ENCODE measurements at regions of chr9 and their contacts with region 1.

Region 1: DNA sequence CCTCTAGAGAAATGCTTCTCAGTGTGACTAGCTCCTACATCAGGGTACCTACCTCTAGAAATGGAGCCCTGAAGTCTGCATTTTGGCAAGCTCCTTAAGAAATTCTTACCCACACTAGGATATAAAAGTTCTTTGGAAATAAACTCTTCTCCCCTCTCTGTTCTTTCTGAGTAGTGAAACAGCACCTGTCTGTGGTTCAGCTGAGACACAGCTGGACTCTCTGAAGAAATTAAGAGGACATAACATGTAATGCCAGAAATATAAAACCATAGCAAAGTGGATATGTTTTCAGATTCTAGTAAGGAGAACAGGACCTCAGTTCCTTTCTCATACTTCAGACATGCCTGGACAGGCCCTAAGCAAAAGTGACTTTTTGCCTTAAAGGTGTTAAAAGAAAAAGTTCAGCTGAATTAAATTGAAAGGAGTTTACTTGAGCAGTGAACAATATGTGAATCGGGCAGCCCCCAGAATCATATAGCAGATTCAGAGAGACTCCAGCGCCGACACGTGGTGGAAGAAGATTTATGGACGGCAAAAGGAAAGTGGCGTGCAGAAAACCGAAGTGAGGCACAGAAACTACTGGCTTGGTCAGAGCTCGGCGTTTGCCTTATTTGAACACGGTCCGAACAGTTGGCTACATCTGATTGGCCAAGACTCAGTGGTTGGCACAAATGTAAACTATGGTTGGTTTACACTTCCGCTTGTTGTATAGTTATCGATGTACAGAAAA is 64.5 kb downstream of the PRKACG start:
- DNase-seq: peak; percentile 39
- H3K4me3 Mint-ChIP-seq: no peak overlapping the region
- H3K27ac Mint-ChIP-seq: no peak overlapping the region
- H3K4me1 Mint-ChIP-seq: peaks cover 36% of the 10 kb centered on the region
- H3K27me3 Mint-ChIP-seq: peaks cover 32% of the 10 kb centered on the region

Region 2: GRCh38 chr9:68653141-68653595 is 296.3 kb before region 1 on chr9:
- CTCF ChIA-PET with region 1: no interaction called
- POLR2A ChIA-PET with region 1: no interaction called
- intact Hi-C with region 1: loop called (anchors 1 kb)
- DNase-seq: peak; percentile 51
- H3K4me3 Mint-ChIP-seq: no peak overlapping the region
- H3K27ac Mint-ChIP-seq: peak overlapping the region; percentile 53
- H3K4me1 Mint-ChIP-seq: peaks cover 28% of the 10 kb centered on the region
- H3K27me3 Mint-ChIP-seq: peaks cover 23% of the 10 kb centered on the region

Region 3: GRCh38 chr9:68802525-68803015 is 146.9 kb before region 1 on chr9:
- CTCF ChIA-PET with region 1: no interaction called
- POLR2A ChIA-PET with region 1: no interaction called
- intact Hi-C with region 1: loop called (anchors 5 kb)
- DNase-seq: peak; percentile 71
- H3K4me3 Mint-ChIP-seq: no peak overlapping the region
- H3K27ac Mint-ChIP-seq: no peak overlapping the region
- H3K4me1 Mint-ChIP-seq: no peaks in the 10 kb centered on the region
- H3K27me3 Mint-ChIP-seq: peaks cover 2% of the 10 kb centered on the region

Region 4: GRCh38 chr9:68933434-68934328 is 15.8 kb before region 1 on chr9:
- CTCF ChIA-PET with region 1: interaction called, 3 read pairs
- POLR2A ChIA-PET with region 1: interaction called, 3 read pairs
- intact Hi-C with region 1: loop called (anchors 2 kb)
- DNase-seq: no peak
- H3K4me3 Mint-ChIP-seq: no peak overlapping the region
- H3K27ac Mint-ChIP-seq: no peak overlapping the region
- H3K4me1 Mint-ChIP-seq: peaks cover 21% of the 10 kb centered on the region
- H3K27me3 Mint-ChIP-seq: peaks cover 38% of the 10 kb centered on the region

Region 5: DNA sequence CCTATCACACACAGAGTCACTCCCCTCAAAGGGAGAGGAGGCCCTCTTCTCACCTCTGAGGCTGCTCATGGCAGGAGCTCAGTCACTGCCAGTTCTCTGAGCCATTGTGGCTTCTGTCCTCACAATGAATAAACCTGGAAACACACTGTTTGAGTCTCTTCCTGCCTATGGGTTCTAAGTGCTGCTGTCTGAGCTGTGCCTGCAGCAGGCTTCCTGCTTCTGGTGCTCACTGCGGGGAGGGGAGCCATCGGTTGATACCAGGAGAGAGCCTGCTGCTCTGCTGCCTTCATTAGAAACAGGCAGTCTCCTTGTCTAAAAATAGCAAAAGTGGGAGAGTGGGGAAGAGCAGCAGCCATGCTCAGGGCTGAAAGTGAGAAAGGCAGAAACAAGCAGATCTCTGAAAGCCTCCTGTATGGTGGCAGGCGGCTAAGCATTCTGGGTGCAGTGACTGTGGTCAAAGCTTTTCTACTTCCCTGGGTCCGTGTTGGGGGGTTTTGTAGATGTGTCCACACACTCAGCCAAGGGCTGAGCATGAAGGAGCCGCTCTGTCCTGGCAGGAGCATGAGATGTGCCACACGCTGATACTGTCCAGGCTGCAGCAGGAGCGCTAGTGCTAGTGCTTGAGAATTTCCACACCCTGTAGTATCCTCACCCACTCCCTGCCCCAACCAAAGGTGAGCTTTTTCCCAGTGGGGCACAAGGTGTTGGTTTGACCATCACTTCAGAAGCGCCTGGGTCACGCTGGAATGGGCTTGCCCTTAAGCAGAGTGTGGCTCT is 30.3 kb after region 1 on chr9:
- CTCF ChIA-PET with region 1: interaction called, 7 read pairs
- POLR2A ChIA-PET with region 1: interaction called, 10 read pairs
- intact Hi-C with region 1: loop called (anchors 1 kb)
- DNase-seq: peak; percentile 67
- H3K4me3 Mint-ChIP-seq: no peak overlapping the region
- H3K27ac Mint-ChIP-seq: peak overlapping the region; percentile 62
- H3K4me1 Mint-ChIP-seq: peaks cover 33% of the 10 kb centered on the region
- H3K27me3 Mint-ChIP-seq: peaks cover 3% of the 10 kb centered on the region

Region 6: GRCh38 chr9:69027355-69028096 is 78.1 kb after region 1 on chr9:
- CTCF ChIA-PET with region 1: interaction called, 3 read pairs
- POLR2A ChIA-PET with region 1: no interaction called
- intact Hi-C with region 1: loop called (anchors 2 kb)
- DNase-seq: peak; percentile 39
- H3K4me3 Mint-ChIP-seq: no peak overlapping the region
- H3K27ac Mint-ChIP-seq: peak overlapping the region; percentile 40
- H3K4me1 Mint-ChIP-seq: peaks cover 32% of the 10 kb centered on the region
- H3K27me3 Mint-ChIP-seq: no peaks in the 10 kb centered on the region